ENCODE measurements at regions of chr2 and their contacts with region 1.

Region 1: DNA sequence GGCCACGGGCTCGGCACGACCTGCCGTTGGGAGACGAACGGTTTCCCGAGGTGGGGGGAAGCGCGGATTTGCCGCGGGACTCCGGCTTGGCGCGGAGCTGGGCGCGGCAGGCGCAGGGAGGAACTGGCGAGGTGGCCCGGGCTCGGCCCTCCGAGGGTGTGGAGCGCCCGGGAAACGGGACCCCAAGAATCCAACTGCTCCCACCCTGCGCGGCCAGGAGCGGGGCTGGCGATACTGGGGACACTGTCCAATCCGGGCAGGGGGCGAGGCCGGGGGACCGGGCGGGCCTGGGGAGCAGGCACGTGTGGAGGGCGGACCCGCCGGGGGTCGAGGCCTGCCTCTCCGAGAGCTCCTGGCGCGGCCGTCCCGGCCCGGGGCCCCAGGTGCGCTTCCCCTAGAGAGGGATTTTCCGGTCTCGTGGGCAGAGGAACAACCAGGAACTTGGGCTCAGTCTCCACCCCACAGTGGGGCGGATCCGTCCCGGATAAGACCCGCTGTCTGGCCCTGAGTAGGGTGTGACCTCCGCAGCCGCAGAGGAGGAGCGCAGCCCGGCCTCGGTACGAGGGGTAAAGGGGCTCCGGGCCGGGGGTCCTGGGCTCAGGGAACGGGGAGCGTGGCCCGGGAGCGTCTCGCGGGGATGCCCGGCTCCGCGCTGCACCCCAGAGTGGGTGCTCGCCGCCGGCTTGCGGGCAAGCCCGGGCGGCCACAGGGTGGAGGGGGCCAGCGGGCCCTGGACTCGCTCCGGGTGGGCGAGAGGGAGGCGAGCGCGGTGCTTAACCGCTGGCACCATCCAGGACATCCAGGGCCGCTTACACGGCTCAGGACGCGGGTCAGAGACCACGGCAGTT is at the start of gene ANXA4:
- DNase-seq: peak; percentile 64
- ATAC-seq: peak; percentile 85
- H3K4me3 Mint-ChIP-seq: peak within 1 kb of the TSS; percentile 95
- H3K27ac Mint-ChIP-seq: peak within 1 kb of the TSS; percentile 89
- H3K4me1 Mint-ChIP-seq: peaks cover 39% of the 10 kb centered on the region
- H3K27me3 Mint-ChIP-seq: no peaks in the 10 kb centered on the region
- CTCF ChIP-seq: no peak
- total RNA-seq, gene ANXA4: 32.0 and 35.4 TPM in 2 replicates

Region 2: DNA sequence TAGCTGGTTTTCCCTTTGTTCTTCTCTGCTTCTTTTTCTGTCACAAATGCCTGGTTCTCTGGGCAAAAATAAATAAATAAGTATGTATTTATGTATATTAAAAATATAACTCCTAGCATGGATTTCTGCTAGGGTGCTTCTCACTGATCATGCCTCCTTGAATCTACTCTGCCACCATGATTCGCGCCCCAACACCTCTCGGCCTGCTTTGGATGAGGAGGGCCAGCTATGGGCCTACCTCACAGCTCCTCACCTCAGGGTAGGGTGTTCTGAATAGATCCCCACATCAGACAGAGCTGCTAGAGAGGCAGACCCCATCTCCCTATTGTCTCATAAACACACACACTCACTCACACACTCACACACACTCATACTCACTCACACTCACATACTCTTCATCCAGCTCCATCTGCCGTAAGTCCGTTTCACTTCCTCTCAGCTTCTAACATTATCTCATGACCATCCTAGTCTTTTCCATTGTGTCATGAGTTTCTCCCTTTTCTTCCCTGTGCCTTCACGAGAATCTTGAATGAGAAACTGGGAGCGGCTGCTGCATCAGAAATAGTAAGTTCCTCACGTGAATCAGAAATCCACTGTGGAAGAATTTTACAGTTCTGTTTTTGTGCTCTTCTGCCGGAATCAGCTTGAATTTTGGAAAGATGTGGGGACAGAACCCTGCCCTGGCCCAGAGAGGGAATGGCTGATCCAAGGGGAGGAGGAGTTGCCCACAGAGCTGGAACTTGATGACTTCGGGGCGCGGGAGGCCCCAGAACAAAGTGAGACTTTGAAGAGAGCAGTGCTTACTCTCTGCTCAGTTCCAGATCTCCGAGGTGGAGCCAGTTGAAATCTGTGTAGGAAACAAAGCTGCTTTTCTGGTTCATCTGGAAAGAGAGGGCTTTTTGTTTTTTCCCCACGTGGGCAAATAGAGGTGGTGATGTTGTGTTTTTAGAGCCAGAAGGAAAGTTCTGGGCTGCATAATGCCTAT is 21.0 kb after region 1 on chr2:
- CTCF ChIA-PET with region 1: no interaction called
- POLR2A ChIA-PET with region 1: no interaction called
- intact Hi-C with region 1: no loop called
- DNase-seq: no peak
- ATAC-seq: peak; percentile 52
- H3K4me3 Mint-ChIP-seq: no peak overlapping the region
- H3K27ac Mint-ChIP-seq: no peak overlapping the region
- H3K4me1 Mint-ChIP-seq: peaks cover 44% of the 10 kb centered on the region
- H3K27me3 Mint-ChIP-seq: no peaks in the 10 kb centered on the region
- CTCF ChIP-seq: no peak

Region 3: DNA sequence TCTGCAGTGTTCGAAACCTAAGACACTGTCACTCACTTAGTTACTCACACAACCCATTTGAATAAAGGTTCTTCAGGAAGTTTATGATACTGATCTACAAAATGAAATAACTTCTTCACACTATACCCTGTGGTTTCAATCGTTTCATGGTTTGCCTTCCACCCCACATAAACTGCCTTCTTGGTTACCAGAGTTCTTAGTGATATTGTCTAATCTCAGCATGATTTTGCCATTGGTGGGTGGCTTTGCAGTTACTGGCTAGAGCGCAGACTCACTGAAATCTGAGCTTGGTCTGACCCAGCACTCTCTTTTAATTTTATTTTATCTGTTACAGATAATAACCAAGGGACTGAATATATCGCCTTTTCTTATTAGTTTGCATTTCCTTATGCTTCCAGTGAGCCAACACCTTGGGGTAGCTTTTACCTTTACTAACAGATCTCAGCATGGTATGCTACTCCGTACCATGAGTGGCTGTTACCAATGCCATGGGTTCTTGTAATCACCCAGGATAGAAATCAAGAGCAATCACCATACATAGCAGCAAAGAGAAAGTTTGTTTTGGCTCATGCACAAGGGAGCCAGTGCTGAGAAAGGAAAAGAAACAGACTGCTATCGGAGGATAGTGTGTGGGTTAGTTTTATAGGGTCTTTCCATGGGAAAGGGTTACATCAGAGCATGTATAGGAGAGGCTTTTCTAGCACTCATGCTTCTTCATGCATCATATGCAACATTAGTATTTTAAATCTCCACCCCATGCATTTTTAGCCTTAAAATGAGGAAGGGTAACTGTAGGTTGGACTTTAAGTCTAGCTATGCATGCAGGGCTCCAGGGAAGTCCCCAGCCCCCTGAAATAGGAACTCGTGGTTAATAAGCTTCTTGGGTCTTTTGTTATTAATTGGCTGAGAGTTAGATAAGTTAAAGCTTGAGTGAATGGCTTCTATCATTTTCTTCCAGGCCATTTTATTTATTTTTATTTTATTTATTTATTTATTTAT is 33.4 kb after region 1 on chr2:
- CTCF ChIA-PET with region 1: interaction called, 3 read pairs
- POLR2A ChIA-PET with region 1: no interaction called
- intact Hi-C with region 1: loop called (anchors 2 kb)
- DNase-seq: no peak
- ATAC-seq: peak; percentile 81
- H3K4me3 Mint-ChIP-seq: peak overlapping the region; percentile 67
- H3K27ac Mint-ChIP-seq: peak overlapping the region; percentile 86
- H3K4me1 Mint-ChIP-seq: peaks cover 68% of the 10 kb centered on the region
- H3K27me3 Mint-ChIP-seq: no peaks in the 10 kb centered on the region
- CTCF ChIP-seq: no peak

Region 4: GRCh38 chr2:69804416-69804815 is 62.6 kb after region 1 on chr2:
- CTCF ChIA-PET with region 1: interaction called, 3 read pairs
- POLR2A ChIA-PET with region 1: interaction called, 7 read pairs
- intact Hi-C with region 1: loop called (anchors 2 kb)
- DNase-seq: no peak
- ATAC-seq: no peak
- H3K4me3 Mint-ChIP-seq: peak overlapping the region; percentile 41
- H3K27ac Mint-ChIP-seq: peak overlapping the region; percentile 37
- H3K4me1 Mint-ChIP-seq: peaks cover 46% of the 10 kb centered on the region
- H3K27me3 Mint-ChIP-seq: no peaks in the 10 kb centered on the region
- CTCF ChIP-seq: no peak

Measured in activated B cell treated with CpG ODN at 0.5 μM for 24 hours (primary cell).